H1 (cell line): ENCODE measurements at regions of chr9 and their contacts with region 1.

Region 1: DNA sequence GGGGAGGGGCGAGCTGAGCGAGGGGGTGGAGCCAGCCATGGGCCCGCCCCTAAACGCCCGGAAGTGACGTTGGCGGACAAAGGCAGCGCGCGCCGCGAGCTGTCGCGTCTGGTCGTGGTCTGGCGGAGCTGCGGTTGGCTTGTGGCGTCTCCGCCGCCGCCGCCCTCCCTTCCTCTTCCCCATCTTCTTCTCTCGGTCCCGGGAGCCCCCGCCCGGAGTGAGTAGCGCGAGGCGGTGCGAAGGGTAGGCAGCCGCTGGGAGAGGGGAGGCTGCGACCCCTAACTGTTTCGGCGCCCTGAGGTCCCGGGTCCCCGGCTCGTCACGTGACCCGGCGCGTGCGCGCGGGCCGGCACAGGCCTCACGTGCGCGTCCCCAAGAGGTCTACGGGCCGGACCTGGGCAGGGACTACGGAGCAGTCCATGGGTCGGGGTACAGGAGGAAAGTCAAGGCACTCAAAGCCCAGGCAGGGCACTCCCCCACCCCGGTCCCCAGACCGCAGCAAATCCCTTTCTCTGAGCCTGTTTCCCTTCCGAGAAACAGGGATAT is at the start of gene NTMT1:
- DNase-seq: peak in 1 of 2 experiments; percentile 98
- H3K4me3 ChIP-seq: peak within 1 kb of the TSS; percentile 78 to 92 (median 83)
- H3K27ac ChIP-seq: peak within 1 kb of the TSS; percentile 88
- H3K4me1 ChIP-seq: peaks cover 10 to 19% (median 13%) of the 10 kb centered on the region in 4 experiments
- H3K27me3 ChIP-seq: peaks cover 3 to 9% (median 7%) of the 10 kb centered on the region in 4 experiments
- CTCF ChIP-seq: no peak
- EP300 ChIP-seq: no peak
- POLR2A ChIP-seq: peak; percentile 93 to 96
- RAD21 ChIP-seq: no peak
- total RNA-seq, gene NTMT1: 66.1 and 70.2 TPM in 2 replicates

Region 2: GRCh38 chr9:129113645-129114304 is 512.4 kb before region 1 on chr9:
- CTCF ChIA-PET with region 1: no interaction called
- POLR2A ChIA-PET with region 1: no interaction called
- DNase-seq: no peak
- H3K4me3 ChIP-seq: no peak overlapping the region
- H3K27ac ChIP-seq: no peak overlapping the region
- H3K4me1 ChIP-seq: peaks cover 0 to 5% (median 3%) of the 10 kb centered on the region in 4 experiments; a peak in 3 of 7 replicates
- H3K27me3 ChIP-seq: peaks cover 0 to 15% (median 13%) of the 10 kb centered on the region in 4 experiments; a peak in 5 of 7 replicates
- CTCF ChIP-seq: no peak
- EP300 ChIP-seq: no peak
- POLR2A ChIP-seq: no peak
- RAD21 ChIP-seq: no peak

Region 3: GRCh38 chr9:129131300-129132145 is 494.6 kb before region 1 on chr9:
- CTCF ChIA-PET with region 1: interaction called, 104 read pairs
- POLR2A ChIA-PET with region 1: no interaction called
- DNase-seq: peak in 1 of 2 experiments; percentile 97
- H3K4me3 ChIP-seq: no peak overlapping the region
- H3K27ac ChIP-seq: no peak overlapping the region
- H3K4me1 ChIP-seq: peaks cover 9 to 18% (median 11%) of the 10 kb centered on the region in 4 experiments; a peak in 6 of 7 replicates
- H3K27me3 ChIP-seq: no peaks in the 10 kb centered on the region
- CTCF ChIP-seq: peak; percentile 84 to 100 (median 99)
- EP300 ChIP-seq: no peak
- POLR2A ChIP-seq: no peak
- RAD21 ChIP-seq: peak; percentile 90 to 91

Region 4: GRCh38 chr9:129460323-129461261 is 165.6 kb before region 1 on chr9:
- CTCF ChIA-PET with region 1: interaction called, 10 read pairs
- POLR2A ChIA-PET with region 1: no interaction called
- DNase-seq: peak; percentile 57 to 83
- H3K4me3 ChIP-seq: peak overlapping the region; percentile 27 to 67 (median 56)
- H3K27ac ChIP-seq: peak overlapping the region; percentile 60; the same call in 1 of the 2 replicates
- H3K4me1 ChIP-seq: peaks cover 3 to 23% (median 19%) of the 10 kb centered on the region in 4 experiments
- H3K27me3 ChIP-seq: peaks cover 0 to 16% (median 8%) of the 10 kb centered on the region in 4 experiments; a peak in 5 of 7 replicates
- CTCF ChIP-seq: peak in 1 of 3 experiments; percentile 3; a peak in 2 of 4 replicates
- EP300 ChIP-seq: peak in 1 of 2 experiments; percentile 3; a peak in 1 of 3 replicates
- POLR2A ChIP-seq: peak in 1 of 2 experiments; percentile 43; a peak in 1 of 3 replicates
- RAD21 ChIP-seq: peak in 1 of 2 experiments; percentile 17; a peak in 1 of 4 replicates

Region 5: DNA sequence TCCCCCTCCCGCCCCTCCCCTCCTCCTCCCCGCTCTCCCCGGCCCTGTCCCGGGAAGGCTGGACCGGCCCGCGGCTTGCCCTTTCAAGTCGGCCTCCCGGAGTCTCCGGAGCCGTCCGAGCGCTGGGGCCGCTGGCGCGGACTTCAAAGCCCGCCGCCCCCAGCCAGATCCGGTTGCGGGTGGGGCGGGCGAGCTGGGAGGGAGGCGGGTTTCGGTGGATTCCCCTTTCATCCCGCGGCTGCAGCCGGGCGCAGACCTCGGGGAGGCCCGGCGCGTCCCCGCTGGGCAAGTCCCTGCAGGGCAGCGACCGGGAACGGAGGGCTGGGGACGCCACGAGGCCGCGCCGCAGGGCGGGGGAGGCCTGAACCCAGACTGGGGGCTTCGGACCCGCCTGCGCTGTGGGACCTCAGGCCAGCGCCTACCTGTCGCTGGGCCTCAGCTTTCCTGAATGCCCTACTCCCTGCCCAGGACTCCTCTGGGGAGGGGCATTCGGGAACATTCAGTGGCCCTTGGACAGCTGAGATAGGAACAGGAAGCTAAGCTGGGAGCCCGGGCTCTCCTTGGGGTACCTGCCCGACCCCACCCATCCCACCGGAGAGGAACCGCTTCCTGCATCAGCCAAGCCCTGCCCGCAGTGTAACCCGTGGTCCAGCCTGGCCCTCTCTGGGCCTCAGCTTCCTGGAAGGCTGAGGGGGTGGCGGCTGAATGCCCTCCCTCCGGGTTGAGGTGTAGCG is 28.6 kb before region 1 on chr9:
- CTCF ChIA-PET with region 1: interaction called, 12 read pairs
- POLR2A ChIA-PET with region 1: no interaction called
- DNase-seq: peak in 1 of 2 experiments; percentile 76
- H3K4me3 ChIP-seq: peak overlapping the region; percentile 52 to 70 (median 55)
- H3K27ac ChIP-seq: no peak overlapping the region
- H3K4me1 ChIP-seq: peaks cover 0 to 21% (median 14%) of the 10 kb centered on the region in 4 experiments; a peak in 6 of 7 replicates
- H3K27me3 ChIP-seq: peaks cover 0 to 29% (median 18%) of the 10 kb centered on the region in 4 experiments; a peak in 6 of 7 replicates
- CTCF ChIP-seq: no peak
- EP300 ChIP-seq: no peak
- POLR2A ChIP-seq: no peak
- RAD21 ChIP-seq: no peak

Region 6: GRCh38 chr9:129602598-129603415 is 23.3 kb before region 1 on chr9:
- CTCF ChIA-PET with region 1: interaction called, 27 read pairs
- POLR2A ChIA-PET with region 1: no interaction called
- DNase-seq: no peak
- H3K4me3 ChIP-seq: no peak overlapping the region
- H3K27ac ChIP-seq: no peak overlapping the region
- H3K4me1 ChIP-seq: peaks cover 0 to 13% (median 12%) of the 10 kb centered on the region in 4 experiments; a peak in 6 of 7 replicates
- H3K27me3 ChIP-seq: peaks cover 0 to 12% (median 9%) of the 10 kb centered on the region in 4 experiments; a peak in 5 of 7 replicates
- CTCF ChIP-seq: no peak
- EP300 ChIP-seq: no peak
- POLR2A ChIP-seq: no peak
- RAD21 ChIP-seq: peak in 1 of 2 experiments; percentile 6; a peak in 1 of 4 replicates

Region 7: DNA sequence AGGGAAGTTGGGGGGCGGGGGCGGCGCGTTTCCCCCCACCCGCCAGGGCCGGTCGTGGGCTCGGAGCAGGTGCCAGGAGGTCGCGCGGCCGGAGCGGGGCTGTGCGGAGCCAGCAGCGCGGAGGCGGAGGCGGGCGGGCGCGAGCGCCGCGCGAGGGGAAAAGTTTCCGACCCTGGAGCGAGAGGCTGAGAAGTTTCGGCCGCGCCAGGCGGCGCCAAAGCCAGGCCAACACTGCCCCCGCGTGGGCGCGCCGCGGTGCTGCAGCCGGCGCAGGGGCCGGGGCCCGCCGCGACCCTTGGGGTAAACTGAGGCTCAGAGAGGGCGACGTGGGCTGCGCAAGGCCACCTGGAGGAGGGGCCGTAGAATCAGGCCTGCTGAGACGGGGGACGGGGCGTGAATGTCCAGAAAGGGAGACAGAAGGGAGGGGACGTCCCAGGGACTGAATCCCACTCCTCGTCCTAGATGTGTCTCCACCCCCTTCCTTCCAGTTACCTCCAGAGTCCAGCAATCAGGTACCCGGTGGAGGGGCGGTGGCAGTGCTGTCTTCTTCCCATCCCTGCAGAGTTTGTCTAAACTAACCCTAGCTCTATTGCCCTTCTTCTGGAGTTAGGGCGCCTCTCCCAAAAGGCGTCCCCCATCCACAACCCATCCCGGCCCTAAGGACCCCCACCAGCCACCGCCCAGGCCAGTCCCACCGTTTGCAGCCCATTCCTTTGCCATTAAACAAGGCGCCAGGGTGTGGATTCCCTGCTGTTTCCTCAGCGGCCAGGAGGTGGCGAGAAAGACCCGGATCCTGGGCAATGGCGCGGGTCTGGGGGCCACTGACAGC is 15.5 kb before region 1 on chr9:
- CTCF ChIA-PET with region 1: interaction called, 71 read pairs
- POLR2A ChIA-PET with region 1: no interaction called
- DNase-seq: peak in 1 of 2 experiments; percentile 96
- H3K4me3 ChIP-seq: peak overlapping the region; percentile 29 to 91 (median 63)
- H3K27ac ChIP-seq: no peak overlapping the region
- H3K4me1 ChIP-seq: peaks cover 0 to 21% (median 10%) of the 10 kb centered on the region in 4 experiments; a peak in 6 of 7 replicates
- H3K27me3 ChIP-seq: peaks cover 0 to 7% (median 4%) of the 10 kb centered on the region in 4 experiments; a peak in 5 of 7 replicates
- CTCF ChIP-seq: peak in 2 of 3 experiments; percentile 89 to 96; a peak in 3 of 4 replicates
- EP300 ChIP-seq: no peak
- POLR2A ChIP-seq: no peak
- RAD21 ChIP-seq: peak; percentile 90 to 95

Region 8: DNA sequence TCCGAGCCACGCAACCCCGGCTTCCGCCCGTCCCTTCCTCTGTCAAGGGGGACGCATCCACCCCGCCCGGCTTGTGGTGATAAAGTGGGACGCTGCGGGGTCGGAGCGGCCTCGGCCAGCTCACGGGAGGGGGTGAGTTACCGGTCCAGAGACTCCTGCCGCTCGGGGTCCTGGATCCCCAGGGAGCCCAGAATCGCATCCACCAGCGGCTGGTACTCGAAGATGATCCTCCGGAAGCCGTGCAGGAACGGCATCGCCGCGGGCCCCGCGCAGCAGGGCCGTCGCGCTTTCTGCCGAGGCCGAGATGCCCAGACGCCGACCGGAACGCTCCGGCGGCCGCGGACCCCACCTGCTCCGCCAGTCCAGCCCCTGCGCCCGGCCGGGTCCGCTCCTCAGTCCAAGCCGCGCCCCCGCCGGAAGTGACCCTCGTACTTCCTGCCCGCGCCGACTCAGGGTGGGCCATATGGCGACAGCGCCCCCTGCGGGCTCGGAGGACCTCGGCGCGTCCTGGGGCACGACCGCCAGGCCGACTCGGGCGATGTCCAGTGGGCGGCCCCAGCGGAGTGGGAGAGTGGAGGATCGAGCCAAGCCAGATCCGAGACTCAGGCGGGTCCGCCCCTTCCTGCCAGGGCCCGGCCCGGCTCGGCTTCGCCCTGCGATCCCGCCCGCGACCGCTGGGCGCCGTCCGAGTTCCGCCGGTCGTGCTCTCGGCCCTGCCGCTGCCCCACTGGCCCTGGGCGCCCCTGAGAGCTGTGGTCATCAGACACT is 15.8 kb after region 1 on chr9 and contains the start of gene ASB6:
- CTCF ChIA-PET with region 1: interaction called, 56 read pairs
- POLR2A ChIA-PET with region 1: interaction called, 95 read pairs
- DNase-seq: peak; percentile 83 to 100
- H3K4me3 ChIP-seq: peak within 1 kb of the TSS; percentile 66 to 98 (median 84)
- H3K27ac ChIP-seq: no peak within 1 kb of the TSS
- H3K4me1 ChIP-seq: peaks cover 0 to 10% (median 6%) of the 10 kb centered on the region in 4 experiments; a peak in 4 of 7 replicates
- H3K27me3 ChIP-seq: no peaks in the 10 kb centered on the region
- CTCF ChIP-seq: peak in 1 of 3 experiments; percentile 97; a peak in 3 of 4 replicates
- EP300 ChIP-seq: peak in 1 of 2 experiments; percentile 73; a peak in 1 of 3 replicates
- POLR2A ChIP-seq: peak in 1 of 2 experiments; percentile 62; a peak in 1 of 3 replicates
- RAD21 ChIP-seq: peak; percentile 92 to 93
- total RNA-seq, gene ASB6: 17.3 TPM in 2 replicates

Region 9: DNA sequence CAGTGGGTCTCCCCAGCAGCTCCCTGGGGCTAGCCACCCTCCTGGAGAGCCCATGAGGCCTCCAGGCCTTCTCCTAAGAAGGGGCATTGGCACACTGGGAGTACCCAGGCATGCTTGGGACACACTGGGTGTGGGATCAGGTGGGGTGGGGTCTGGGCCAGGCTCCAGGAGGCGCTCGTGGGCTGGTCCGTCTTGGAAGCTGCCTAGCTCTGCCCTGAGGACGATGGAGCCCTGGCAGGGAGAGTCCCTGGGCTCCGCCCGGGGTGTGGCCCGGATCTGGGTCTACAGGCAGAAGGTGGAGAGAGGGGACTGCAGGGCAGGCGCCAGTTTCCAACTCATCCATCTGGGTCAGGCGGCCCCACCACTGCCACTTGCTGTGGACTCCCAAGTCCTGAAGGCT is 41.7 kb after region 1 on chr9:
- CTCF ChIA-PET with region 1: no interaction called
- POLR2A ChIA-PET with region 1: no interaction called
- DNase-seq: no peak
- H3K4me3 ChIP-seq: no peak overlapping the region
- H3K27ac ChIP-seq: no peak overlapping the region
- H3K4me1 ChIP-seq: peaks cover 0 to 10% (median 5%) of the 10 kb centered on the region in 4 experiments; a peak in 6 of 7 replicates
- H3K27me3 ChIP-seq: peaks cover 9 to 26% (median 20%) of the 10 kb centered on the region in 4 experiments
- CTCF ChIP-seq: peak in 2 of 3 experiments; percentile 14 to 15; a peak in 1 of 4 replicates
- EP300 ChIP-seq: no peak
- POLR2A ChIP-seq: no peak
- RAD21 ChIP-seq: peak in 1 of 2 experiments; percentile 12; a peak in 1 of 4 replicates

Region 10: DNA sequence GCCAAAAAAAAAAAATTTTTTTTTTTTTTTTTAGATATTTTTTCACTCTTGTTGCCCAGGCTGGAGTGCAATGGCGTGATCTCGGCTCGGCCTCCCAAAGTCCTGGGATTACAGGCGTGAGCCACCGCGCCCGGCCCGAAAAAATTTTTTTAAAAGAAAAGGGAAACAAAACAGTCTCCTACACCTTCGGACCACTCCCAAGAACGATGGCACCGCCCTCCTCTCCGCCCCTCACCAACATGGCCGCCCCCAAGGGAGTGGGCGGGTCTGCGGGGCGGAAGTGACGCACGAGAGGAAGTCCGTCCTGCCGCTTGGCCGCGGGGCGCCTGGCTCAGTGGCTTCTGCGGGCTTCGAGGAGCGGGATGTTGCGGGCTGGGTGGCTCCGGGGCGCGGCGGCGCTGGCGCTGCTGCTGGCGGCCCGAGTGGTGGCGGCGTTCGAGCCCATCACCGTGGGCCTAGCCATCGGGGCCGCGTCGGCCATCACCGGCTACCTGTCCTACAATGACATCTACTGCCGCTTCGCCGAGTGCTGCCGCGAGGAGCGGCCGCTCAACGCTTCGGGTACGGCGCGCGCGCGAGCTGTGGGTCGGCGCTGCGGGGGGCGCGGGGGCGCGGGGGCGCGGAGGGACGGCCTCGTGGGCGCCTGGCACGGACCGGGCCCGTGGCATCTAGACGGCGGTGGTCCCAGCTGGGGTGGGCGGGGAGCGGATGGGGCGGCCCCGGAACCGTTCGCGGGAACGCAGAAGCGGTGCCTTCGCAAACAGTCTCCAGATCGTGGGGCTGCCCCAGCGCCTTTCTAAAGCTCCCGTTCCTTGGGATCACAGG is 176.9 kb after region 1 on chr9 and contains the start of gene TOR1B:
- CTCF ChIA-PET with region 1: no interaction called
- POLR2A ChIA-PET with region 1: no interaction called
- DNase-seq: peak; percentile 77 to 98
- H3K4me3 ChIP-seq: peak within 1 kb of the TSS; percentile 65 to 100 (median 86)
- H3K27ac ChIP-seq: no peak within 1 kb of the TSS
- H3K4me1 ChIP-seq: peaks cover 0 to 5% (median 2%) of the 10 kb centered on the region in 4 experiments; a peak in 5 of 7 replicates
- H3K27me3 ChIP-seq: no peaks in the 10 kb centered on the region
- CTCF ChIP-seq: no peak
- EP300 ChIP-seq: no peak
- POLR2A ChIP-seq: peak in 1 of 2 experiments; percentile 79; a peak in 2 of 3 replicates
- RAD21 ChIP-seq: no peak
- total RNA-seq, gene TOR1B: 17.4 and 19.2 TPM in 2 replicates